Dorsolateral prefrontal cortex (tissue), 120 donors: ENCODE measurements at regions of chr9 and their contacts with region 1.

Region 1: DNA sequence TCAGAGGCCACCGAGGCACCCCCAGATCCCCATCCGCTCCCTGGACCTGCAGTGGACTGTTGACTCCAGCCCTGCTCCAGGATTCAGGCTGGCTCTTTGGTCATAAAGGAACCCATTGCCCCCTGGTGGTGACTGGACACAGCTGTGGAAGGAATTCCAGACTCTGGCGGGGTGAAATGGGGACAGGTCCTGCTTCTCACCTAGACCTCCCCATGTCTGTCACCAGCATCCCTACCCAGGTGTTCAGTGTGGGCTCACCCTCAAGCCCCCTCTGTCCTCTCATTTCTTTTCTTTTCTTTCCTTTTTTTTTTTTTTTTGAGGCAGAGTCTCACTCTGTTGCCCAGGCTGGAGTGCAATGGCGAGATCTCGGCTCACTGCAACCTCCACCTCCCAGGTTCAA is 25.5 kb upstream of the STXBP1 start:
- DNase-seq: peak; percentile 52 to 87 (median 80)
- H3K4me3 ChIP-seq: no peak overlapping the region
- H3K27ac ChIP-seq: no peak overlapping the region
- H3K27me3 ChIP-seq: no peaks in the 10 kb centered on the region
- CTCF ChIP-seq: peak; percentile 67 to 95 (median 89)

Region 2: GRCh38 chr9:126947529-126947928 is 639.0 kb before region 1 on chr9:
- intact Hi-C with region 1: loop called in 1 of 2 experiments (anchors 10 kb)
- DNase-seq: no peak
- H3K4me3 ChIP-seq: no peak overlapping the region
- H3K27ac ChIP-seq: no peak overlapping the region
- H3K27me3 ChIP-seq: no peaks in the 10 kb centered on the region
- CTCF ChIP-seq: no peak

Region 3: GRCh38 chr9:127503947-127504782 is 82.4 kb before region 1 on chr9:
- intact Hi-C with region 1: loop called (anchors 1 kb)
- DNase-seq: peak; percentile 66 to 86 (median 83)
- H3K4me3 ChIP-seq: no peak overlapping the region
- H3K27ac ChIP-seq: peak overlapping the region in 8 of 59 donors; percentile 3 to 53 (median 31)
- H3K27me3 ChIP-seq: no peaks in the 10 kb centered on the region
- CTCF ChIP-seq: peak; percentile 61 to 95 (median 87)

Region 4: DNA sequence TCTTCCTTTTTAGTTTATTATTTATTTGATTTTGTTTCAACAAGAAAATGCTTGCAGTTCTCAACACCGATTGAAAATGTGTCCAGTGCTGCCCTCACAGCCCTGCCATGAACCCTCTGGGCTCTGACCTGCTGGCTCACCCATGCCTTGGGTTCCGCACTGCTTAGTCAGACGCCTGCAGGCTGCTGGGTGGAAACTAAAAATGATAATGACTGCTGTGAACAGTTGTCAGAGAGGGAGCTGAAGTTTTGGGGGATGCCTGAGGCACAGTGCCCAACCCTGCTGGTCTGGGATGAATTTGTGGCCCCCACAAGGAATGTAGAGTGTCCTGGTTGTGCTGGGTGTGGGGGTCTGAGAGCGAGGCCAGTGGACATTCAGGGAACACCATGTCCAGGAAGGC is 98.0 kb after region 1 on chr9:
- intact Hi-C with region 1: no loop called
- DNase-seq: no peak
- H3K4me3 ChIP-seq: no peak overlapping the region
- H3K27ac ChIP-seq: peak overlapping the region in 24 of 59 donors; percentile 3 to 87 (median 20)
- H3K27me3 ChIP-seq: no peaks in the 10 kb centered on the region
- CTCF ChIP-seq: no peak

Region 5: DNA sequence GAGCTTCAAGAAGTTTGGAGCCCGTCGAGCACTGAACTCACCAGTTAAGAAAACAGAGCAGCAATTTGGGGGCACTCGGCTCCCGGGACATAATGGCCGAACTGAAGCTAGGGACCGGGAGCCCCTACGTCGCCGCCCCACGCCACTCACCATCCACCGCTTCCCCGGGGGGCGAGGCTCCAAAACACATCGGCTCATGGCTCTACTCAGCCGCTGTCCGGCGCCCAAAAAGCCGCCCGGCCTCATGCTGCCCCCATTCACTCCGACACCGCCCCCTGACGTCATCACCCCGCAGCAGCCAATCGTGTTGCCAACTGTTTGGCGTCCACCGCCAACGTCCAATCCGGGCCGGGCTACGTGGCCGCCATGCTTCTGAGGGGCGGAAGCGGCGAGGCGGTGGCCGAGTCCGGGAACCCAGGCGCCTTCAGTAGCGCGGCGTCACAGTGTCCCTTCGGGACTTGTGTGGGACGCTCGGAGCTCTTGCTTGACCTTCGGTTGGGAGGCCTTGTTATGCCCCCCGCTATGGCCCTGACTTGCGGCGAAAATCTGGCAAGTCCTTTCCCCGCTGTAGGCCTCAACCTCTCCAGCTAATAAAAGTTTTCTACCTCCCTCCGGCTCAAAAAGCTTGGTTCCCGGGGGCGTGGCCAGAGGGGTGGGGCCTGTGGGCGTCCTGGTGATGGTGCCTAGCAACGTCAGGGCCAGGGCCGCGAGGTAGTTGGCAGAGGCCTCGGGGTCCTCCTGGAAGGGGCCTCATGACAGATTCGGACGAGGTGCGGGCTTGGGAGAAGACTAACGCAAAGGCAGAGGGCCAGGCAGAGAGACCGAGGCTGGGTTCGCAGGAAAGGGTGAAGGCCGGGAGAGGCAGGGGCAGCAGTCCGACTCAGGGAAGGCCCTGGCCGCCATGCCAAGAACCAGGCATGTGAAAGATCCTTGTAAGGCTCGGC is 129.1 kb after region 1 on chr9 and contains the starts of genes PTRH1 and TTC16:
- intact Hi-C with region 1: loop called in 1 of 2 experiments (anchors 5 kb)
- DNase-seq: peak; percentile 95 to 99 (median 98)
- H3K4me3 ChIP-seq: peak within 1 kb of the TSS; percentile 61 to 100 (median 85)
- H3K27ac ChIP-seq: peak within 1 kb of the TSS in 52 of 59 donors; percentile 6 to 89 (median 69)
- H3K27me3 ChIP-seq: no peaks in the 10 kb centered on the region
- CTCF ChIP-seq: peak in 27 of 56 donors; percentile 3 to 53 (median 24)
- total RNA-seq, gene PTRH1: 4.2 to 19.6 (median 11.9) TPM
- total RNA-seq, gene TTC16: 0.15 to 1.4 (median 0.47) TPM in 110 of 120 experiments, not detected in the others

Region 6: GRCh38 chr9:127785023-127785932 is 198.7 kb after region 1 on chr9:
- intact Hi-C with region 1: loop called (anchors 2 to 5 kb)
- DNase-seq: peak; percentile 76 to 90 (median 80)
- H3K4me3 ChIP-seq: peak overlapping the region; percentile 37 to 100 (median 96)
- H3K27ac ChIP-seq: peak overlapping the region; percentile 52 to 98 (median 93)
- H3K27me3 ChIP-seq: no peaks in the 10 kb centered on the region
- CTCF ChIP-seq: peak; percentile 50 to 97 (median 88)

Region 7: GRCh38 chr9:127869310-127870152 is 283.0 kb after region 1 on chr9:
- intact Hi-C with region 1: loop called in 1 of 2 experiments (anchors 2 kb)
- DNase-seq: peak; percentile 62 to 87 (median 80)
- H3K4me3 ChIP-seq: no peak overlapping the region
- H3K27ac ChIP-seq: peak overlapping the region in 17 of 59 donors; percentile 10 to 64 (median 34)
- H3K27me3 ChIP-seq: no peaks in the 10 kb centered on the region
- CTCF ChIP-seq: peak; percentile 57 to 89 (median 81)

Region 8: DNA sequence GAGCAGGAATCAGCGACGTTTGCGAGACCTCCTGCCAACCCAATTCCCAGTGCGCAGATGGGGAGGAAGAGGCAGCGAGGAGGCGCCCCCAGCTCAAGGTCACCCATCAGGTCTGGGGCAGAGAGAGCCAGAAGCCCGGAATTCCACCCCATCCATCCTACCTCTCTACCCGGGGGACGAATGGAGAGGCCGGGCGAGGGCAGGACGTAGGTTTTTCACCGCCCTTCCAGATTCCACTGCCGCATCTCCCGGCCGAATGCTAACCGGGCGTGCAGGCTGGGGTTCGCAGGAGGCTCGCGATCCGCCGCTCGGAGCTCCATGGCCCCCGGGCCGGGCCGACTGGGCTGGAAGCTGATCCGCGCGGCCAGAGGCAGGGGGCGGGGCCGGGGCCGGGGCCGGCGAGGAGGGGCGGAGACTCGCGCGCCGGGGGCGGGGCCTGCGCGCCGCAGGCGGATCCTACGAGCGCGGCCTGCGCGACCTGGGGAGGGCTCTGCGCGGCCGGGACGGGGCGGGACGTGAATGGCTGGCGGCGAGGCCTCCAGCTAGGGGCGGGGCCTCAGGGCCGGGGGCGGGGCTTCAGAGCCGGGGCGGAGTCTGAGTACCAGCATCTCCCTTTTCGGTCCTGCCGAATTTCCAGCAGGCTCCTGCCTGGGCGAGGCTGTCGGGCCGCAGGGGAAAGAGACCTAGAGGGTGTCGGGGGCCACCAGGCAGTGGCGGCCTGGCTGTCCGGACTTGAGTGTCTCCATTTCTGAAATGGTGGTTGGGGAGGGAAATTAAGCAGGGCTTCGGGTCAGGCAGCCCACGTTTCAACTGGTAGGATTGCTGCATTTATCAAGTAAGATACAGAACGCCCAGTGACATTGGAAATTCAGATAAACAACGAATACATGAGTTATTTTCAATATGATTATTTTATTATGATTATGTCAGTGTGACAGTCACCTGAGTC is 330.4 kb after region 1 on chr9 and contains the start of gene ST6GALNAC4:
- intact Hi-C with region 1: loop called in 1 of 2 experiments (anchors 1 kb)
- DNase-seq: peak; percentile 88 to 96 (median 93)
- H3K4me3 ChIP-seq: peak within 1 kb of the TSS; percentile 54 to 92 (median 80)
- H3K27ac ChIP-seq: peak within 1 kb of the TSS in 55 of 59 donors; percentile 6 to 88 (median 77)
- H3K27me3 ChIP-seq: no peaks in the 10 kb centered on the region
- CTCF ChIP-seq: peak in 9 of 56 donors; percentile 10 to 43 (median 23)
- total RNA-seq, gene ST6GALNAC4: 13.2 to 58.0 (median 23.6) TPM